ENCODE measurements at regions of chr6 and their contacts with region 1.

Region 1: GRCh38 chr6:16761471-16762267 is 409 bp upstream of the ATXN1 start:
- DNase-seq: peak; percentile 95
- ATAC-seq: peak; percentile 68
- H3K4me3 Mint-ChIP-seq: peak overlapping the region; percentile 100
- H3K27ac Mint-ChIP-seq: peak overlapping the region; percentile 99
- H3K4me1 Mint-ChIP-seq: peaks cover 59% of the 10 kb centered on the region
- H3K27me3 Mint-ChIP-seq: no peaks in the 10 kb centered on the region

Region 2: GRCh38 chr6:16355699-16356446 is 405.8 kb before region 1 on chr6:
- CTCF ChIA-PET with region 1: no interaction called
- DNase-seq: no peak
- ATAC-seq: no peak
- H3K4me3 Mint-ChIP-seq: no peak overlapping the region
- H3K27ac Mint-ChIP-seq: no peak overlapping the region
- H3K4me1 Mint-ChIP-seq: peaks cover 2% of the 10 kb centered on the region
- H3K27me3 Mint-ChIP-seq: no peaks in the 10 kb centered on the region

Region 3: DNA sequence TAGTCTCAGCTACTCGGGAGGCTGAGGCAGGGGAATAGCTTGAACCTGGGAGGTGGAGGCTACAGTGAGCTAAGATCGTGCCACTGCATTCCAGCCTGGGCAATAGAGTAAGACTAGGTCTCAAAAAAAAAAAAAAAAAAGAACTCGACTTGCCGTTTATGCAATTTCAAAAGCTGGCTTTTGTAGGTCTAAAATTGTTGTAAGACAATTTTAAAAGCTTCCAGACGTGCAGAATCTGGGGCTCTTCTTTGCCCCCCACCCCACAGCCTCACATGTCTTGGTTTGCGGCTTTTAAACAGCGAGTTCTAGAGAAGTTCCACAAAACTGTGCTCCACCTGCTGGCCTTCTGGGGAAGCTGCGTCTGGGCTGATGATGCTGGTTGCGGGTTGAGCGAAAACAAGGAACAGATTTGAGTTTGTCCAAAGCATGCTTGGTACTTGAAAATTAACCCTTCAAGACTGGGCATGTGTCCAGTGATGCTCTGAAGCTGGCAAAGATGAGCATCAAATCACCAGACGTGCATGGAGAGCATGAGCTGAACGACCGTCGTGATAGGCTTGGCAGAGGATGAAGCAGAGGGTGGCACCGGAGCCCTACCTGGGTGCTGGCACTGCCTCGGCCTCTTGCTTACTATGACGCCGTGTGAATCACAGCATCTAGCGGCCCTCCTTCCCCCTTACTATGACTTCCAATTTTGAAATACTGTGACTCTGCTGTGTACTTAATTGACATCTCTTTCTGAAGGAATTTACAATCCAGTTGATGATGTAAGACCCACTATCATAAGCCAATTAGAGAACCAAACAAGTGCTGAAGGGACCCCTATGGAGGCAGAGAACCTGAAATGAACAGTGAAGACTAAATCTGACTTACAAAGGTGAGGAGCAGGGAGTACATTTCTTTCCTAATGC is 351.9 kb before region 1 on chr6:
- CTCF ChIA-PET with region 1: interaction called, 11 read pairs
- DNase-seq: peak; percentile 75
- ATAC-seq: peak; percentile 54
- H3K4me3 Mint-ChIP-seq: no peak overlapping the region
- H3K27ac Mint-ChIP-seq: peak overlapping the region; percentile 56
- H3K4me1 Mint-ChIP-seq: peaks cover 47% of the 10 kb centered on the region
- H3K27me3 Mint-ChIP-seq: no peaks in the 10 kb centered on the region

Region 4: DNA sequence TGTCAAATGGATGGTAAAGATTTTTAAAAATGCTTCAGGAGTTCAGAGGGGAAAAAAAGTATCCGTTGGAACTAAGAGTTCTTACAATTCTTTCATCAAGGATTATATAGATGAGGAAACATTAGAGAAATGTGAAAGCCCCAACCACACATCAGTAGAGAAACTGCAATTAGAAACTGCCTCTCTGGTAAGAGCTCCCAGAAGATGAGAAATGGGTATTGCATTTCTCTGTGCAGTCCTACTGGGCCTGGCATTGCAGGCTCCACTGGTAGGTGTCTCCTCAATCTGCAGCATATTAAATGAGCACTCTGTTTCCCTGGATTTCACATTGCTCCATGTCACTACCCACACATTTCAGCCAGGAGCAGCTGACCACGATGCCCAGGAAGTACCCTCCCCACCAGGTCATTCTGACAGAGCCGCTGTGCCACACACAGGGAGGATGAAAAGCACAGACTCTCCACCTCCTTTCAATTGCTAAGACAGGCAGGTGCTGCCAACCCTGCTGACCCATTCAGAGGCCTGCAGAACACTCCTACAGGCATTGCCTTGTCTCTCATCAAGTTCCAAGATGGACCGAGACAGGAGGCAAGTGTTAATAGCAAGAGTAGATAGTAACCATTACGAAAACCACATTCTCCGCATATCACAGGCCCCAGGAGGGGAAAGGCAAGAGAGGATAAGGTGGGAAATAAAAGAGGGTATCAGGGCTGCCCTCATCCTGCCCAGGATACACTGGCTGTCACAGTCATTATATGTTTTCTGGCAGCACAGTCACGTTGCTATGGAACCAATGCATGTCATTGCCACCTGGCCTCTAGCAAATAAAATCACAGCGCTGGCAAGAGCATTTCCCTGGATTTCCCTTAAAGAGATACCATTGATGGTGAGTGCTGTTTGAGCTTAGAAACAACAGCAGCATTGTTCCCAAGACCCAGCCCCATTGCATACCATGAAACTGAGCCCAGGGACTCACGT is 242.1 kb before region 1 on chr6:
- CTCF ChIA-PET with region 1: interaction called, 24 read pairs
- DNase-seq: no peak
- ATAC-seq: no peak
- H3K4me3 Mint-ChIP-seq: no peak overlapping the region
- H3K27ac Mint-ChIP-seq: no peak overlapping the region
- H3K4me1 Mint-ChIP-seq: peaks cover 54% of the 10 kb centered on the region
- H3K27me3 Mint-ChIP-seq: no peaks in the 10 kb centered on the region

Region 5: DNA sequence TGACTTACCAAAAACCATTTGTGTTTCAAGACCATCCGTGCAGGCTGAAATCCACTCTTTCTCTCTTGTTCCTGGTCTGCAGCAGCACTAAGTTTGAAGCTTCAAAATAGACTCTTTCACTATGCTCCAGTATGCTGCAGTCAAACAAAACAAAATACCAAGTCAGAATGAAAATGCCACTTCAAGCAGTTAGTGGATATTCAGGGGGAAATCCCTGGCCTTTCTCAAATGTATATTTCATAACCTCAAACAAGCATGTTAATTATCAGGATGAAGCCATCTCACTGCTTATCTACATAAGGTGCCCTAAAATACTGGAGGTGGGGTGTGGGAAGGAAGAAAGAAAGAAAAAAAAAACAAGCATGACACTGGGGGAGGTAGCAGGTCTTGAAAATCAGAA is 103.9 kb before region 1 on chr6:
- CTCF ChIA-PET with region 1: interaction called, 19 read pairs
- DNase-seq: no peak
- ATAC-seq: peak; percentile 47
- H3K4me3 Mint-ChIP-seq: peak overlapping the region; percentile 53
- H3K27ac Mint-ChIP-seq: peak overlapping the region; percentile 85
- H3K4me1 Mint-ChIP-seq: peaks cover 70% of the 10 kb centered on the region
- H3K27me3 Mint-ChIP-seq: no peaks in the 10 kb centered on the region

Region 6: GRCh38 chr6:16712931-16713484 is 48.7 kb before region 1 on chr6:
- CTCF ChIA-PET with region 1: interaction called, 40 read pairs
- DNase-seq: peak; percentile 59
- ATAC-seq: peak; percentile 47
- H3K4me3 Mint-ChIP-seq: peak overlapping the region; percentile 74
- H3K27ac Mint-ChIP-seq: peak overlapping the region; percentile 91
- H3K4me1 Mint-ChIP-seq: peaks cover 58% of the 10 kb centered on the region
- H3K27me3 Mint-ChIP-seq: no peaks in the 10 kb centered on the region

Region 7: DNA sequence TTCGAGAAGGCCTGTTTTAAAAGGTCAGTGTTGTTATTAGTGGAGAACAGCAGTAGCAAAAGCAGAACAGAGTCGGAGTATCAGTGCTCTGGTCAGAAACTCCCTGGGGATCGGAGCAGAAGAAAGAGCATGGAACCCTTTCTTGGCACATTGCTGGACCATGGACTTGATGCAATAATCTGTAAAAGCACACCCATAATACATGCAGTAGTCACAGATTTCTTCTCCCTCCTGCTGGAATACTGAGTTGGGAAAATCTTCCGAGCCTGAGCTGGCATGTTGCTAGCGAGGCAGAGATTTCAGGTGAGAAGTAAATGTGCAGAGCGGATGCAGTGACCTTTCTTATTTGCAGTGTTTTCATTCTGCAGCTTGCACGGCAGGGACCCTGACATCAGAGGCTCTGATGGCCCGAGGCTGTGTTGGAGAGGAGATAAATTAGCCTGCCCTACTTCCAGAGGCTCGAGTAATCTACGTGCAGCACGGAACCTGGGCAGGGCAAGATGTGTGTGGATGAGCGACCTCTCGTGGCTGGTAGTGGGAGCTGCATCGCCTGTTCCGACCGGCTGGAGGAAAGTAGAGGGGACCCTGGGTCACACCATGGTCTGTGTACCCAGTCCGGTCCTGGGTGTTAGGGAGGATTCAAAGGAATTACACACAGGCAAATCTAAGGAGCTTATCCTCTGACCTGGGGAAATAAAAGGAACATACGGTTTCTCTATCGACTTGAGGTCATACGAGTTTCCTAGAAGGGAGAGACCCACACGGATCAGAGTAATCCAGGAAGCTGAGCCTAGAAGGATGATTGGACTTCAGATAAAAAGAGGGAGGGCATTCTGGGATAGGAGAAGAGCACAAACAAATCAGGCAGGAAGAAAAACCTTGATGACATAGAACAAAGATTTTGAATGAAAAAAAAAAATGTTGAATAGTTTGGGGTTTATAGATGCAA is 203.2 kb after region 1 on chr6:
- CTCF ChIA-PET with region 1: interaction called, 23 read pairs
- DNase-seq: peak; percentile 76
- ATAC-seq: peak; percentile 70
- H3K4me3 Mint-ChIP-seq: no peak overlapping the region
- H3K27ac Mint-ChIP-seq: no peak overlapping the region
- H3K4me1 Mint-ChIP-seq: peaks cover 6% of the 10 kb centered on the region
- H3K27me3 Mint-ChIP-seq: peaks cover 15% of the 10 kb centered on the region

Measured in activated CD8-positive, alpha-beta memory T cell treated with anti-CD3 and anti-CD28 coated beads, Interleukin-2, amount 10 ng/mL, durations not matched to agents 7 days and 5 days (primary cell).